Activated naive CD4-positive, alpha-beta T cell treated with anti-CD3 and anti-CD28 coated beads for 36 hours (primary cell): ENCODE measurements at regions of chr13 and their contacts with region 1.

Region 1: DNA sequence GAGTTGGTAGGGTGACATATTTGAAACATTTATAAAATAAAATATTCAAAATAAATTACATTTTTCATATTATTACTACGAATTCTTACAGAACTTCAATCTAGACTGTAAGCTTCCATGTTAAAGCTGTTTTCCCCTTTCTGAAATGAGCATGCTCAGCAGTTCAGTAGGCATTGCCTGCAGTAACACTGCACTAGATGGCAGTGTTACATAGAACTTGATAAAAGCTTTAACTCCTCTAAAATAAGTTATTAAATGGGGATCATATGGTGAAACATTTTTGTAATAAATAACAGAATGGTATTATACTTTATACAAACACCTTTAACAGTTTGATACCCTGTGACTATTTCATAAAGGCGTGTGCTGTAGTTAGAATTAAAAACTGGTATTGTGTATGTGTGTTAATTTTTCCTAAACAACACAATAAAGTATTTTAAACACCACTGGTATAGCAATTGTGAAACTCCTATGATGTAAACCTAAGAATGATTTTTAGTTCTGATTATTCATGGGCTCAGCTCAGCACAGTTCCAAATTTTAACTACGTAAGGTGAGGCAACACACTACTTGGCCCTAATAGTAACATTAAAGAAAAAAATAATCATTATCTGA is 11.6 kb upstream of the GPR18 start:
- DNase-seq: peak; percentile 44
- H3K4me3 Mint-ChIP-seq: no peak overlapping the region
- H3K27ac Mint-ChIP-seq: peak overlapping the region; percentile 16
- H3K4me1 Mint-ChIP-seq: peaks cover 69% of the 10 kb centered on the region
- H3K27me3 Mint-ChIP-seq: no peaks in the 10 kb centered on the region

Region 2: DNA sequence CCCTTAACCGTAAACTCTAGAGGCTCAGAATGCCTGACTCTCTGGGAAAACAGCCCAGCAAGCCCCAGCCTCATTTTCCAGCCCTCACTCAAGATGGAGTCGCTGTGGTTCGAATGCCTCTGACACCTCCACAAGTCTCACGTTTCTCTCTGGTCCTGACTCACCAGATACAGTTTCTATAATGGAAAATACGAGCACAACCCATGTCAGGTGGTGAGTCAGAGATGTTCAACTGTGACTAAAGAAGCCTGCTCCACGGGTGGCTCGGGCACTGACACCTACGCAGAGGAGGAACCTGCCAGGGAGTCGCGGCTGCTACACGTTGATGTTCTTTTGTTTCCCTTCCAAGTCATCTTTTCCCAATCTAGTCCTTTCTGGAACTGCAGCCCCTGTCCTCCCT is 605.7 kb before region 1 on chr13:
- CTCF ChIA-PET with region 1: no interaction called
- intact Hi-C with region 1: loop called (anchors 5 kb)
- DNase-seq: peak; percentile 85
- H3K4me3 Mint-ChIP-seq: no peak overlapping the region
- H3K27ac Mint-ChIP-seq: peak overlapping the region; percentile 44
- H3K4me1 Mint-ChIP-seq: peaks cover 19% of the 10 kb centered on the region
- H3K27me3 Mint-ChIP-seq: no peaks in the 10 kb centered on the region

Region 3: DNA sequence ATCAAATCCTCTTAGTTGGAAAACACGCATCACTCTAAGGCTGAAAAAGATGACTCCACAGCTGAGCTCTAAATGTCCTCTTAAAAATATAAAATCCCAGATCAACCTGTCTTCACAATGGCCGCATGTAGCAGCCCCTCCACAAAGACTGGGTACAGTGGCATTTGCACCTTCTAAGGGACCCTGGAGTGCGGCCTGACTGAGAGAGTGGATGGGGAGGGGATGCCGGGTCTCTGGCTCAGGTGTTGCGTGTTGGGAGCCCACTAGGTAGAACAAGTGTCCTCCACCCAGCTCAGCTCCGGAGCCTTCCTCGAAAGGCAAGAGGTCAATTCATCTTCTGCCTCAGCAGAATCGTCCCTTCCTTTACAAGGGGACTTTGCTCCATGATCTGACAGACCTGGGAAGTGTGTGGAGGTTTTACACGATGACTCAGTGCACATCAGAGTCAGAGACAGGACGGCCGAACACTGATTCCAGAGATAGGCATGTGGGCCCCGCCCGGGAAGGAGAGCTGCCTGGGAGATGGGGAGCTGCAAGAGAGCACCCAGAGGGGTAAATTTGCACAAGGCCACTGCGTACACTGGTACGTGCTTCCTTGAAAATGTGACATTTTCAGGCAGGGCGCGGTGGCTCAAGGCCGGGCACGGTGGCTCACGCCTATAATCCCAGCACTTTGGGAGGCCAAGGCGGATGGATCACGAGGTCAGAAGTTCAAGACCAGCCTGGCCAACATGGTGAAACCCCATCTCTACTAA is 493.7 kb before region 1 on chr13:
- CTCF ChIA-PET with region 1: no interaction called
- intact Hi-C with region 1: no loop called
- DNase-seq: no peak
- H3K4me3 Mint-ChIP-seq: no peak overlapping the region
- H3K27ac Mint-ChIP-seq: no peak overlapping the region
- H3K4me1 Mint-ChIP-seq: no peaks in the 10 kb centered on the region
- H3K27me3 Mint-ChIP-seq: peaks cover 8% of the 10 kb centered on the region

Region 4: GRCh38 chr13:99124794-99125316 is 144.9 kb before region 1 on chr13:
- CTCF ChIA-PET with region 1: interaction called, 5 read pairs
- intact Hi-C with region 1: loop called (anchors 2 kb)
- DNase-seq: peak; percentile 23
- H3K4me3 Mint-ChIP-seq: peak overlapping the region; percentile 35
- H3K27ac Mint-ChIP-seq: no peak overlapping the region
- H3K4me1 Mint-ChIP-seq: peaks cover 42% of the 10 kb centered on the region
- H3K27me3 Mint-ChIP-seq: no peaks in the 10 kb centered on the region

Region 5: GRCh38 chr13:99214232-99214631 is 55.5 kb before region 1 on chr13:
- CTCF ChIA-PET with region 1: interaction called, 10 read pairs
- intact Hi-C with region 1: loop called (anchors 1 kb)
- DNase-seq: peak; percentile 83
- H3K4me3 Mint-ChIP-seq: peak overlapping the region; percentile 72
- H3K27ac Mint-ChIP-seq: peak overlapping the region; percentile 78
- H3K4me1 Mint-ChIP-seq: peaks cover 82% of the 10 kb centered on the region
- H3K27me3 Mint-ChIP-seq: no peaks in the 10 kb centered on the region

Region 6: GRCh38 chr13:99307648-99308339 is 38.1 kb after region 1 on chr13:
- CTCF ChIA-PET with region 1: interaction called, 21 read pairs
- intact Hi-C with region 1: loop called (anchors 2 kb)
- DNase-seq: peak; percentile 89
- H3K4me3 Mint-ChIP-seq: peak overlapping the region; percentile 93
- H3K27ac Mint-ChIP-seq: peak overlapping the region; percentile 99
- H3K4me1 Mint-ChIP-seq: peaks cover 73% of the 10 kb centered on the region
- H3K27me3 Mint-ChIP-seq: no peaks in the 10 kb centered on the region

Region 7: GRCh38 chr13:99366075-99366987 is 96.6 kb after region 1 on chr13:
- CTCF ChIA-PET with region 1: interaction called, 16 read pairs
- intact Hi-C with region 1: loop called (anchors 1 kb)
- DNase-seq: peak; percentile 28
- H3K4me3 Mint-ChIP-seq: peak overlapping the region; percentile 17
- H3K27ac Mint-ChIP-seq: peak overlapping the region; percentile 48
- H3K4me1 Mint-ChIP-seq: peaks cover 87% of the 10 kb centered on the region
- H3K27me3 Mint-ChIP-seq: no peaks in the 10 kb centered on the region

Region 8: DNA sequence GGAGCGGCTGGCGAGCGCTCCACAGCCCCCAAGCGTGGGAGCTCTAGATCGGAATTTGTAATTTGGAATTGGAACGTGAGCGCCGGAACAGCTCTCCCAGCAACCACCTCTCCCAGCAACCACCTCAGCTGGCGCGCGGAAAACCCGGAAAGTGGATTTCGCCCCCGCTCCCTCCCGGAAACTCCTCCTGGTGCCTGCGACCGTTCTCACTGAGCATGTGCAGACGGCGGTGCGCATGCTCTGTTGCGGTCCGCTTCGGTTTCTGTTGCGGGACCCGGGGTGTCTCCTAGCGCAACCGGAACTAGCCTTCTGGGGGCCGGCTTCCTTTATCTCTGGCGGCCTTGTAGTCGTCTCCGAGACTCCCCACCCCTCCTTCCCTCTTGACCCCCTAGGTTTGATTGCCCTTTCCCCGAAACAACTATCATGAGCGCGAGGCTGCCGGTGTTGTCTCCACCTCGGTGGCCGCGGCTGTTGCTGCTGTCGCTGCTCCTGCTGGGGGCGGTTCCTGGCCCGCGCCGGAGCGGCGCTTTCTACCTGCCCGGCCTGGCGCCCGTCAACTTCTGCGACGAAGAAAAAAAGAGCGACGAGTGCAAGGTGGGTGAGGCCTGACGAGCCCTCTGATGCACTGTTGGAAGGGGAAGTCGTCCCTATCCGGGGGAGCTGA is 231.6 kb after region 1 on chr13 and contains the start of gene TM9SF2:
- CTCF ChIA-PET with region 1: interaction called, 8 read pairs
- intact Hi-C with region 1: loop called (anchors 1 kb)
- DNase-seq: peak; percentile 98
- H3K4me3 Mint-ChIP-seq: peak within 1 kb of the TSS; percentile 92
- H3K27ac Mint-ChIP-seq: peak within 1 kb of the TSS; percentile 92
- H3K4me1 Mint-ChIP-seq: peaks cover 70% of the 10 kb centered on the region
- H3K27me3 Mint-ChIP-seq: no peaks in the 10 kb centered on the region
- total RNA-seq, gene TM9SF2: 35.2 to 36.4 TPM

Region 9: DNA sequence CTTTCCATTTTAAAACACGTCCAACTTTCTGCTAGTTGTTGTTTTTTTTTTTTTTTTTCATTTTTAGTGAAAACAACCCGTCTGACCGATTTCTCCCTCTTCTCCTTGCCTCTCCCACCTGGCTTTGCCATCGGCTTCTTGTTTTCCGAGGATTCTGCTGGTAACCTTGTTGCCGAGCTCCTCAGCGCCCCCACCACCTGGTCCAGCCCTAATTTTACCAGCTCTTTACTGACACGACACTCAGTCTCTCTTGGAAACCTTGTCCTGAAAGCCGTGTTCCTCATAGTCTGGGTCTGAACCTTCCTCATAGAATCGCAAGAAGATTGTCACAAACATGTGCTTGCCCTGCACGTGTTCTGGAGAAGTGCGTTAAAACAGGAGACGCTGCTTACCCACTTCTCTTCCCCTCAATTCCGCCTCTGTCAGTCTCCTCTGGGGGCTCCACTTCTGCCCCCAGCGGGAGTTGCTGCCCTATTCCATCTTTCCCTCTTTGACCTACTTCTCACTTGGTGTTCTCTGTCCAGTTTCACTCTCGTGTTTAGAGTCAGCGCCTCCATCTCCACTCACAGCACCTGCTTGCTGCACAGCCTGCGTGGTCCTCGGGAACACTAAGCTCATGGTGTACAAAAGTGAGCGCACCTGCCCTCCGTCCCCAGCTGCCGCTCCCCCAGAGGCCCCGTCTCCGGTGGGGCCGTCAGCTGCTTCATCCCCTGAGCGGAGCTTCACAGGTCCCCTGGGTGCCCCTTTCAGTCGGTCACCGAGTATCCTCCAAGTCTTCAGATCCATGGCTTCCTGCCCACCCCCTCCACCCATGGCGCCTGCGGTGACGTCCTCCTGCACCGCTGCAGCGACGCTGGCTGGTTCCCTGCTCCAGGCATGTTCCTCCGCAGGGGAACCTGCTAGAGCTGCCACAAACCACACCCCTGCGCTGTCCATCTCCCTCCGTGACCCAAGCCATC is 296.7 kb after region 1 on chr13:
- CTCF ChIA-PET with region 1: no interaction called
- intact Hi-C with region 1: no loop called
- DNase-seq: no peak
- H3K4me3 Mint-ChIP-seq: peak overlapping the region; percentile 59
- H3K27ac Mint-ChIP-seq: no peak overlapping the region
- H3K4me1 Mint-ChIP-seq: peaks cover 6% of the 10 kb centered on the region
- H3K27me3 Mint-ChIP-seq: no peaks in the 10 kb centered on the region

Region 10: GRCh38 chr13:99821741-99822140 is 552.0 kb after region 1 on chr13:
- CTCF ChIA-PET with region 1: no interaction called
- intact Hi-C with region 1: no loop called
- DNase-seq: no peak
- H3K4me3 Mint-ChIP-seq: no peak overlapping the region
- H3K27ac Mint-ChIP-seq: no peak overlapping the region
- H3K4me1 Mint-ChIP-seq: peaks cover 16% of the 10 kb centered on the region
- H3K27me3 Mint-ChIP-seq: no peaks in the 10 kb centered on the region